CD4-positive, alpha-beta memory T cell (primary cell): ENCODE measurements at regions of chr6 and their contacts with region 1.

Region 1: GRCh38 chr6:135423649-135424128 is 73.9 kb downstream of the AHI1 start:
- DNase-seq: peak in 4 of 5 donors; percentile 13 to 24 (median 21)
- H3K4me3 ChIP-seq: no peak overlapping the region
- H3K4me3 Mint-ChIP-seq: no peak overlapping the region
- H3K27ac ChIP-seq: no peak overlapping the region
- H3K27ac Mint-ChIP-seq: no peak overlapping the region
- H3K4me1 ChIP-seq: no peaks in the 10 kb centered on the region
- H3K4me1 Mint-ChIP-seq: no peaks in the 10 kb centered on the region
- H3K27me3 ChIP-seq: no peaks in the 10 kb centered on the region
- H3K27me3 Mint-ChIP-seq: no peaks in the 10 kb centered on the region

Region 2: DNA sequence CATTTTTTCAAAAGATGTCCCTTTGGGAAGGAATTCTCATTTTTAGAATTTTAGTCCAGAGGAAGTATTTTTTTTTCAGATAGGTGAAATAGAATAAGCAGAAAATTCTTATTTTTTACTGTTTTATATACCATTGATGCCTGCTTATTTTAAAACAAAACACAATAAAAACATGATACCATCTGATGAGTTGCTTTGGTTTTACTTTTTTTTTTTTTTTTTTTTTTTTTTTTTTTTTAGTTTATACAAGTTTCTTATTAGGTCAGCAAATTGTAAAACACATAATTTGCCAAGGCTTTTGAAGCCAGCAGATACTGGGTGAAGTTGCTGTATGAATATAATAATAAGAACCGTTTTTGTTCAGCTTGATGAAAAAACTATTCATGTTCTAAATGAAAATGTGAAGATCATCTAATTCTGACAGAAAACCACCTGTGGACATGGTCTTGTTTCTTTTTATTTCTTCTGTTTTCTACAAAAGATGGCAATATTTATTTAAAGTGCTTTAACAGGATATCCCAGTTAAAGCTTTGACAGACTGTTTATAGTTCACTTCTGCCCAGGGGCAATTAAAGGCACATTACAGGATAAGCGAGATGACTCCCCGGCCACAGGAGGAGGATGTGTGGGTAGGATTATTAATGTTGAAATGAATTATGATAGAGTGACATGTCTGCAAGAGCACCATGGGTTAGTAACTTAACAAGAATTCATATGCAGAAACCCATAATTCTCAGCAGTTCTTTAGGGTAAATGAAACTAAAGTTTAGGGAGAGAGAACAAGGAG is 211.5 kb before region 1 on chr6:
- CTCF ChIA-PET with region 1: no interaction called
- POLR2A ChIA-PET with region 1: no interaction called
- intact Hi-C with region 1: loop called (anchors 10 kb)
- DNase-seq: no peak
- H3K4me3 ChIP-seq: no peak overlapping the region
- H3K4me3 Mint-ChIP-seq: peak overlapping the region in 7 of 8 donors; percentile 1 to 60 (median 53)
- H3K27ac ChIP-seq: no peak overlapping the region
- H3K27ac Mint-ChIP-seq: peak overlapping the region in 2 of 7 donors; percentile 0 to 44
- H3K4me1 ChIP-seq: peaks cover 37% of the 10 kb centered on the region
- H3K4me1 Mint-ChIP-seq: peaks cover 19 to 35% (median 28%) of the 10 kb centered on the region in 4 donors
- H3K27me3 ChIP-seq: no peaks in the 10 kb centered on the region
- H3K27me3 Mint-ChIP-seq: no peaks in the 10 kb centered on the region